B cell (primary cell): ENCODE measurements at regions of chr4 and their contacts with region 1.

Region 1: DNA sequence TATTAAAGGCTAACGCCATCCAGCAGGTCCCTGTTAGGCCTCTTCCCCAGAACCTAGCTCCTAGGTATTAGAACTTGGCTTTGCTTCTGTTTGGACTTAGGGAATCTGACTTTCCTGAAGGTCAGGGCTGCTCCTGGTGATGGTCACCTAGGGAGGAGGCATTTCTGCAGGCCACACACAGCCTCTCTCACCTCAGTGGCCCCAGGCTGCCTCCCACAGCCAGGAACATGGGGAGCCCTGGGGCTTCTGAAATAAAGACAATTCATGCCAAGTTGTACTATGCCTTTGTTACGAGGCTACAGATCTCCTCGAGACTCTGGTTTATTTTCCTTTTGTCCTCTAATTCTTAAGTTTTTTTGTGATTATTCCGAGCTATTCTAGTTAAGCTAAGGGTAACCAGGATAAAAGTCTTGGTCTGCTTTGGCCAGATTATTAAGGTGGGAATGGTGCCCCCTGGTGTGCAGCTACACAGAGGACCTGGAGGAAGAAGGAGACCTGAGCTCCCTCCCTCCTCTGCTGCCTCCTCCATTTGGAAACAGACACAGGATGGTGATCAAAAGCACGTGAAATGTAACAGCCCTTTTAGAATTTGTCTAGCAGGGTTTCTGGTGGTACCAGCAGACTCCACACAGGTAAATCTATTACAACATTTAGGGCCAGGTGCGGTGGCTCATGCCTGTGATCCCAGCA is 131.0 kb downstream of the DCLK2 start:
- DNase-seq: peak; percentile 67
- ATAC-seq: peak; percentile 21
- H3K4me3 ChIP-seq: no peak overlapping the region
- H3K4me3 Mint-ChIP-seq: no peak overlapping the region
- H3K27ac ChIP-seq: no peak overlapping the region
- H3K27ac Mint-ChIP-seq: no peak overlapping the region
- H3K4me1 ChIP-seq: peaks cover 0 to 6% of the 10 kb centered on the region in 2 donors
- H3K4me1 Mint-ChIP-seq: peaks cover 5% of the 10 kb centered on the region
- H3K27me3 ChIP-seq: no peaks in the 10 kb centered on the region
- H3K27me3 Mint-ChIP-seq: no peaks in the 10 kb centered on the region
- CTCF ChIP-seq: peak; percentile 64

Region 2: DNA sequence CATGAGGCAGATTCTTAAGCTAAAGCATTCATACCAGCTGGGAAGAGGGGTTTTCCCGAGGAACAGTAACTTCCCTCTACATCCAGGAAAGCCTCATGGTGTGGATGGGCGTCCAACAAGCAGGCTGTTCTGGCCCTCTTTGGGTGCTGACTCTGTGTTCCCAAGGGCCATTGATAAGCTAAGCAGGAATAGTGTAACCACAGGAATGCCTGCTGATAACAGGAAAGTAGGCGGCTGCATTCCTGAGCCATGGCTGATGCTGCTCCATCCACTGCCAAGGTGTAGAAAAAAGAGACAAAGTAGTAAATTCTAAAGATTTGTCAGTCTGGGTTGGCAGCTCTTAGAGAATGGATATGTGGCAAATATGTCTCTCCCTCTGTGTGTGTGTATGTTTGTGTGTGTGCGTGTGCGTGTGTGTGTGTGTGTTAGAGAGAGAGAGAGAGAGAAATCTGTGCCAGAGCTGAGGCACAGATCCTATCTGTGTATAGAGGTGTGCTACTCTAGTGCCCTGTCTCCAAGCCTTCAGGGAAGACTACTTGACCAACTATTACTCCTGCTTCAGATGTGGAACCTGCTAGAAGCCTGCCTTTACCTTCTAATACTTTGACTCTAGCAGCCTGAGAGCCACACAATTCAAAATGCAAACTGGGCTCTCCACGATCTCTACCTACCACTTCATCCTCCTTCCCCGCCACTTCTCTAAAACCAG is 1414.0 kb before region 1 on chr4:
- CTCF ChIA-PET with region 1: no interaction called
- POLR2A ChIA-PET with region 1: no interaction called
- intact Hi-C with region 1: no loop called
- DNase-seq: no peak
- ATAC-seq: no peak
- H3K4me3 ChIP-seq: no peak overlapping the region
- H3K4me3 Mint-ChIP-seq: no peak overlapping the region
- H3K27ac ChIP-seq: no peak overlapping the region
- H3K27ac Mint-ChIP-seq: no peak overlapping the region
- H3K4me1 ChIP-seq: no peaks in the 10 kb centered on the region
- H3K4me1 Mint-ChIP-seq: no peaks in the 10 kb centered on the region
- H3K27me3 ChIP-seq: no peaks in the 10 kb centered on the region
- H3K27me3 Mint-ChIP-seq: no peaks in the 10 kb centered on the region
- CTCF ChIP-seq: no peak

Region 3: DNA sequence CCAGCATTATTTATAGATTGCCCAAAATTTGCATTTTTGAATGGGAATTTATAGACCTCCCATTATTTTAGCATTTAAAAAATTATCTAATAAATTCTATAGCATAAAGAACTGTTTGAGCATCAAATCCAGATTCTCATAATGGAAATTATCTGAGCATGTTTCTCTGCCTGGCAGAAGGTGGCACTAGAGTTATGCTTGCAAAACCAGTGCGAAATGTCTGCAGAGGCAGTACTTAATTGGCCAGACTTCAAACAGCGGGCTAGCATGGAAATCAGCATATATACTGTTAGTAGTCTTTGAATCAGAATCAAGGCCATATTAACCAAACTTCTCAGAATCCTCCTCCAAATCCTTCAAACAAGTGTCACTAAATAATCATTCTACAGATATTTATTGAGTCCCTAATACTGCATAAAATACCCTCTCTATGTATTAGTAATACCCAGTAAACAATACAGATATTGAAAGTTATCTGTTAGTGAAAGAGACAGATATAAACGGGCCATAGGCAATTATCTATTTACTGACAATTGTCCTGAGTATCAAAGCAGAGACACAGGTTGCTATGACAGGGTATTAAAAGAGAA is 209.7 kb before region 1 on chr4:
- CTCF ChIA-PET with region 1: interaction called, 155 read pairs
- POLR2A ChIA-PET with region 1: no interaction called
- intact Hi-C with region 1: loop called (anchors 1 kb)
- DNase-seq: peak; percentile 52
- ATAC-seq: no peak
- H3K4me3 ChIP-seq: no peak overlapping the region
- H3K4me3 Mint-ChIP-seq: no peak overlapping the region
- H3K27ac ChIP-seq: no peak overlapping the region
- H3K27ac Mint-ChIP-seq: no peak overlapping the region
- H3K4me1 ChIP-seq: no peaks in the 10 kb centered on the region
- H3K4me1 Mint-ChIP-seq: peaks cover 2% of the 10 kb centered on the region
- H3K27me3 ChIP-seq: no peaks in the 10 kb centered on the region
- H3K27me3 Mint-ChIP-seq: peaks cover 5% of the 10 kb centered on the region
- CTCF ChIP-seq: peak; percentile 75